ENCODE measurements at regions of chr17 and their contacts with region 1.

Region 1: DNA sequence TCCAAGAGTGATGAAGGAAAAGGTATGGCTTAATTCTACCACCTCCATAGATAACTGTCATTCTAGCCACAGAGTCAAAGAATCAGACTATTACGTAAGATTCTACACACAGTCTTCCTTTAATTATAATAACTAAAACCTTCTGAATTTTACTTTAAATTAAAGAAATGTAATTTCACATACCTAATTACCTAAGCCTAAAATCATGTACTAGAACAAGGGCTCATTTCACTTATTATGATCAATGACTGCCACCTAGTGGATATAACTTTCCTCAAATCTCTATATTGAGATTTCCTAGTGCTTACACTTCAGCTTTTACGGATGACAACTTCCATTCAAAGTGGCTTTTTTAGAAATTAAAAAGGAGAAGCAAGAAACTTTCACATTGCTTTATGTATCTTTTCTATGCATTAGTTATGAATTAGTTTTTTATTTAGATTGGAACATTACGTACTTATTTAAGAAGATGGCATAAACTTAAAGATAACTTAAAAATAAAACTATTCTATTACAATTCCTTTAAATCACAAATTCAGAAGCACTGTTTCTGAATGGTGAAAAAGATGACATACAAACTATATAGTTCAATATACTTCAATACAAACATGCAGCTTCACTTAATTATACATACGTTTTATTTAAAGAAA is 18.2 kb upstream of the ABCA10 start:
- H3K4me3 ChIP-seq: no peak overlapping the region
- H3K27ac ChIP-seq: no peak overlapping the region
- H3K4me1 ChIP-seq: no peaks in the 10 kb centered on the region
- CTCF ChIP-seq: no peak

Region 2: GRCh38 chr17:69235338-69235930 is 11.4 kb before region 1 on chr17:
- CTCF ChIA-PET with region 1: interaction called, 20 read pairs
- POLR2A ChIA-PET with region 1: no interaction called
- H3K4me3 ChIP-seq: no peak overlapping the region
- H3K27ac ChIP-seq: no peak overlapping the region
- H3K4me1 ChIP-seq: no peaks in the 10 kb centered on the region
- CTCF ChIP-seq: peak; percentile 87

Measured in HEK293 (cell line).